GM18951 (cell line): ENCODE measurements at regions of chr12 and their contacts with region 1.

Region 1: DNA sequence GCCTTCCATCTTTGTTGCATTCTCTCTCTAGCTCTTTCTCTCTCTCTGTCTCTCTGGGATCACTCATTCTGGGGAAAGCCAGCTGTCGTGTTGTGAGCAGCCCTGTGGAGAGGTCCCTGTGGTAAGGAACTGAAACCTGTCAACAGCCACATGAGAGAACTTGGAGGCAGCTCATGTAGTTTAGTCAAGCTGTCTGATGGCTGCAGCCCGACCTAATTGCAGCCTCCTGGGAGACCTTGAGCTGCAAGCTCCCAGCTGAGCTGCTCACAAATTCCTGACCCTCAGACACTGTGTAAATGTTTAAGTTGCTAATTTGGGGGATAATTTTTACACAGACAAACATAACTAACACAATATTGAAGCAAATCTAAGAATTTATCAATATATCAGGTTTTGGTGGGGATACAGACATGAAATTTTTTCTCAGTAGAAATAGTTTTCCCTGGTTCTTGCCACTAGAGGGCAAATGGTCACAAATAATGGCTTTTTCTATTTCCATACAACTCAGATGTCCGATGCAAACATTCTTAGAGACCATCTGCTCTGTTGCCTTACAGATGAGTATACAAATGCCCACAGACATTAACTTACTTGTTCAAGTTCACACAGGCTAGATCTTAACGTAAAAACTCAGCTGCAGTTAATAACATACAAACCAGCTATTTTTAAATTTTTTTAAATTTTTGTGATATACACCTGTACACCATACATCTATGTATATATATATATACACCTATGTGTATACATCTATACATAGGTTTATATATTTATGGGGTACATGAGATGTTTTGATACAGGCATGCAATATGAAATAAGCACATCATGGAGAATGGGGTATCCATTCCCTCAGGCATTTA is 15.5 kb upstream of the KRR1 start:
- POLR2A ChIP-seq: no peak

Region 2: GRCh38 chr12:76449583-76449982 is 922.7 kb after region 1 on chr12:
- in situ Hi-C with region 1: loop called (anchors 25 kb)
- POLR2A ChIP-seq: no peak